Dorsolateral prefrontal cortex (tissue), 120 donors: ENCODE measurements at regions of chr15 and their contacts with region 1.

Region 1: GRCh38 chr15:67863442-67863987 is 23.7 kb upstream of the RNU6-1 start:
- DNase-seq: peak; percentile 60 to 84 (median 68)
- H3K4me3 ChIP-seq: peak overlapping the region; percentile 35 to 77 (median 60)
- H3K27ac ChIP-seq: peak overlapping the region in 21 of 59 donors; percentile 3 to 77 (median 38)
- H3K27me3 ChIP-seq: no peaks in the 10 kb centered on the region
- CTCF ChIP-seq: peak; percentile 82 to 99 (median 95)

Region 2: DNA sequence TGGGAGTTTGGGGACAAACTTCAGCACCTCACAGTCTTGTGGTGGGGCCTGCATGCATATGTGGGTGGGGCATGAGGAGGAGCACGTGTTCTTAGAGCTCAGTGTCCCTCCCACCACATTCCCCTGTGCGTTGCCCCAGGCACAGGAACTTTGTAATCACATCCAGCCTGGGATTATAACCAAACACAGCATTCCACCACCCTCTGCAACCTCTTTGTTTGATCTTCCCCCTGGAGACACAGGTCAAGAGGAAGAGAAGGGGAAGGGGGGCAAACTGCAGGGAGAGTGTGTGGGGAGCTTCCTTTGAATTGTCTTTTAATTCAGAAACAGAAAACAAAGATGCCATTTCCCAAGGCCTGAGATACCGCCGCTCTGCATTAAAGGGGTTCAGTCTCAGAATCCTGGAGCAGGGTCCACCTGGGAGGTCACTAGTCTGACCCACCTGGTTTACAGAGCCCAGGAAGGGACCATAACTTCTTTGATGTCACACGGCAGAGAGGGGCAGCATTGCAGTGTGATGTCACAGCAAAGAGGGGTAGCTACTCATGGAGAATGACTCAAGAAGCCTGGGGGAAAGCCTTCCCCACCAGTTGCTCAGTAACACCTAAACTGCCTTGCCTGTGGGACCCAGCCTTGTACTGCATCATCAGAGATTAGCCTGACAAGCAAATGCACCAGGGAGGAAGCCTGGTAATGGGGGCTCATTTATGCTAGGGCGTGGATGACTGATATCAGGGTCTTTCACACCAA is 82.6 kb after region 1 on chr15:
- intact Hi-C with region 1: no loop called
- DNase-seq: no peak
- H3K4me3 ChIP-seq: no peak overlapping the region
- H3K27ac ChIP-seq: peak overlapping the region in 29 of 59 donors; percentile 7 to 79 (median 43)
- H3K27me3 ChIP-seq: no peaks in the 10 kb centered on the region
- CTCF ChIP-seq: no peak

Region 3: GRCh38 chr15:68053701-68054627 is 190.4 kb after region 1 on chr15 and contains the start of gene PIAS1:
- intact Hi-C with region 1: loop called (anchors 5 kb)
- DNase-seq: peak; percentile 88 to 96 (median 94)
- H3K4me3 ChIP-seq: peak within 1 kb of the TSS; percentile 75 to 99 (median 90)
- H3K27ac ChIP-seq: peak within 1 kb of the TSS; percentile 12 to 96 (median 88)
- H3K27me3 ChIP-seq: no peaks in the 10 kb centered on the region
- CTCF ChIP-seq: peak in 39 of 56 donors; percentile 6 to 61 (median 34)
- total RNA-seq, gene PIAS1: 40.9 to 75.2 (median 58.5) TPM

Region 4: GRCh38 chr15:68154923-68155559 is 291.5 kb after region 1 on chr15:
- intact Hi-C with region 1: loop called (anchors 1 to 5 kb)
- DNase-seq: peak in 3 of 10 donors; percentile 6 to 46 (median 44)
- H3K4me3 ChIP-seq: no peak overlapping the region
- H3K27ac ChIP-seq: peak overlapping the region in 1 of 59 donors; percentile 1
- H3K27me3 ChIP-seq: no peaks in the 10 kb centered on the region
- CTCF ChIP-seq: peak; percentile 53 to 90 (median 74)

Region 5: DNA sequence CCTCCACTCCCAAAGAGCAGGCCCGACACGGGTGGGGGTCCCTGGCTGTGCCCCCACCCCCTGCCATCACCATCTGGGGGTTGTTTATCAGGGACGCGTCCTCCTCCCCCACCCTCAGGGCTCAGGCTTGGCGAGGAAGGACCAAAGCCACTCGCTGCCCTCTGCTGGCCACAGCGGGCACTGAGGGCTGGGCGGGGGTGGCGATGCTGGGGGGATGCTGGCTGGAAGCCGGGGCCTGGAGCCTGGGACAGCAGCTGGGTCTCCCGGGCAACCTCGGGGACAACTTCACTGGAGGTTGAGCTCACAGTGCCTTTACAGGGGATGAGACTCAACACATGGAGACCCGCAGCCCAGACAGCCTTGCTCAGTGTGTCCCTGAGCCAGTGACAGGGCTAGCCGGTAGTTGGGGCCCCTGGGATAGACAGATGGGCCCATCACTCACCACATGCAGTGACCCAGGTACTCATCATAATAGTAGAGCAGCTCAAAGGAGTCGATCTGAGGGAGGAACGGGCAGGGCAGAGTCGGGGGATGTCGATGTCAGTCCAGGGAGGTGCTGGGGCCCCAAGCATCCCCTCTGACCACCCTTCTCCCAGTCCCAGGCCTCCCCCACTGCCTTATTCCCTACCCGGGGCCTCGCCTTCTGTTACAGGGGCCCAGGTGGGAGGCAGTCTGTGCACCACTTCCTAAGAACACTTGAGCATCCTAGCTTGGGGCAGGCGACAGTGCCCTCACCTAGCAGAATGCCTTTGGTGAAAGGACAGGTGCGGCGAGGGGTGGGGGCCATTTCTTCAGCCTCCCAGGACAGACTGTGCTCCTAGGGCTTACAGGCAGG is 347.5 kb after region 1 on chr15:
- intact Hi-C with region 1: loop called (anchors 5 to 10 kb)
- DNase-seq: peak; percentile 79 to 92 (median 81)
- H3K4me3 ChIP-seq: peak overlapping the region in 57 of 59 donors; percentile 10 to 68 (median 49)
- H3K27ac ChIP-seq: peak overlapping the region in 54 of 59 donors; percentile 36 to 93 (median 73)
- H3K27me3 ChIP-seq: no peaks in the 10 kb centered on the region
- CTCF ChIP-seq: peak; percentile 54 to 98 (median 92)

Region 6: DNA sequence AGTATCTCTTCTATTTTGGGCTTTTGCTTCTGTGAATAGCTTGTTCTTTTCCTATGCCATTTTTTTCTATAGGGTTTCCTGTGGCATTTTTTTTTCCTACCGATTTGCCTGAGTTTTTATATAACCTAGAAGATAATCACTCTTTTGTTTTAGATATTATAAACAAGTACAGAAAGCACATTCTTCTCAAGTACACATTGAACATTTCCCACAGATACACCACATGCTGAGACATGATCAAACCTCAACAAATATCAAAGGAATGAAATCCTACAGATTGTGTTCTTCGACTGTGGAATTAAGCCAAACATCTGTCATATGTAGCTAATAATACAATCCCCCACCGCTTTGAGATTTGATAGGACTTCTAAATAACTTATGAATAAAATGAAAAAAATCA is 404.9 kb after region 1 on chr15:
- intact Hi-C with region 1: no loop called
- DNase-seq: no peak
- H3K4me3 ChIP-seq: no peak overlapping the region
- H3K27ac ChIP-seq: peak overlapping the region in 26 of 59 donors; percentile 3 to 73 (median 45)
- H3K27me3 ChIP-seq: peaks cover 0 to 3% (median 0%) of the 10 kb centered on the region in 45 donors
- CTCF ChIP-seq: no peak